ENCODE measurements at regions of chr10 and their contacts with region 1.

Region 1: GRCh38 chr10:69901628-69902505 is 100.2 kb downstream of the COL13A1 start:
- DNase-seq: no peak
- H3K4me3 ChIP-seq: no peak overlapping the region
- H3K27me3 ChIP-seq: no peaks in the 10 kb centered on the region
- CTCF ChIP-seq: peak; percentile 81

Region 2: DNA sequence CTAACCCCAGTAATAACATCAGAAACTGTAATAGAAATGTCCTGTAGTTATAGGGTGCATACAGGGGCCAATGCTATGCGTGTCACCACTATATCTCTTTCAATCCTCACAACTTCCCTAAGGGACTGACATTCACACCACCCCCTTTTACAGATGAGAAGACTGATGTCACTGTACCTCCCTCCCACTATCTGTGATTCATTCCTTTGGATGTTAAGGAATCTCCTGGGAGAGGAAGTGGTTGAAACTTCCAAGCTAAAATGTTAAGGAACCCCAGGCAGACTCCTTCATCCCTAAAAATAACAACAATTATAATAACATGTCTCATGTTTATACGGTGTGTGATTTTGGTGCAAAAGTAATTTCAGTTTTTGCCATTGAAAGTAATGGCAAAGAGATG is 94.7 kb before region 1 on chr10:
- CTCF ChIA-PET with region 1: interaction called, 11 read pairs
- POLR2A ChIA-PET with region 1: no interaction called
- DNase-seq: peak; percentile 63
- H3K4me3 ChIP-seq: no peak overlapping the region
- H3K27me3 ChIP-seq: no peaks in the 10 kb centered on the region
- CTCF ChIP-seq: no peak

Region 3: DNA sequence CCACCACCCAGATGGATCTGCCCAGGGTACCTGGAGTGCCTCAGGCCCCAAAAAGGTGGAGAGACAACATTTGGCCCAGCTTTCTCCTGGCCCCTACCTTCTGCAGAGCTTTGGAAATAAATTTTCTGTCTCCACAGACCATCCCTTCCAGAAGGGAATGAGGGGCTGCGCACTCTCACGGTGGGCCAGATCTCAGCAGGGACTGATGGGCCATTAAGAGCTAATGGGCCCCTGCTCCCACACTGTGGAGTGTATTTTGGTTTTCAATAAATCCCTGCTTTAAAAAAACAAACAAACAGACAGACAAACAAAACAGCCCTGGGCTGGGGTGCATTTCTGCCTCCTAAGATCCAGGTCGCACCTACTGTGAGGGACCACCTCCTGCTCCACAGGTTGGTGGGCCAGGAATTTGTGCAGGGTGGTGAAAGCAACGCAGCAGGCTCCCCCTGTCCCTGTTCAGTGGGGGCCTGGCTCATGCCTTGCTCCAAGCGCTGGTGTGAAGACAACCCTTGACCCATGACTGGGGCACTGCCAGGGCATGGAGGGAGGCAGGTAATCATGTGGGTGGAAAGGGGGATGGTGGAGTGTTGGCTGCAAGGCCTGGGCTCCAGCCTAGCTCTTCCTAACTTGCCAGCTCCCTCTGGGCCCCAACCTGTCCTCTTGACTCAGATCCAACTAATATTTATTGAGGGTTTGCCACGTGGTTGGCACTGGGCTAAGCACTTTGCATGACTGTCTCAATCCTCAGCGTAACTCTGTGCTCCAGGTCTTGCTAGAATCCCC is 11.6 kb before region 1 on chr10:
- CTCF ChIA-PET with region 1: interaction called, 33 read pairs
- POLR2A ChIA-PET with region 1: no interaction called
- DNase-seq: no peak
- H3K4me3 ChIP-seq: no peak overlapping the region
- H3K27me3 ChIP-seq: no peaks in the 10 kb centered on the region
- CTCF ChIP-seq: no peak

Region 4: DNA sequence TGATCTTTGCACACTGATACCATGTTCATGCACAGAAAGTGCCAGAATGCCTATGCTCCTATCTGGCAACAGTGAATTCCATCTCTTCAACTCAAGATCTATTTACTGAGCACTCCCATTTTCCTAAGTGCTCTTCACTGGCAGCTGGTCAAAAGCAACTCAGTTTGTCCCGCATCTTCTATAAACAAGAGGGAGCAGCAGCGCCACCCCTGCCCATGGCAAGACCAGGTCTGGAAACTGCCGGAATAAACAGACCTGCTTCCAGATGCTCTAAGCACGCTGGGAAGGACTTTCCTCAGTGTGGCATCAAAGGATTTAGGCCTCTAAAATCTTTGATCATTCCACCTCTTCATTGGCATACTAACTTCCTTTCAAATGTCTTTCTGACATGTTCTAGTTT is 46.4 kb after region 1 on chr10:
- CTCF ChIA-PET with region 1: no interaction called
- POLR2A ChIA-PET with region 1: no interaction called
- DNase-seq: no peak
- H3K4me3 ChIP-seq: no peak overlapping the region
- H3K27me3 ChIP-seq: no peaks in the 10 kb centered on the region
- CTCF ChIP-seq: no peak

Measured in BJ (cell line).